A549 (cell line): ENCODE measurements at regions of chr1 and their contacts with region 1.

Region 1: DNA sequence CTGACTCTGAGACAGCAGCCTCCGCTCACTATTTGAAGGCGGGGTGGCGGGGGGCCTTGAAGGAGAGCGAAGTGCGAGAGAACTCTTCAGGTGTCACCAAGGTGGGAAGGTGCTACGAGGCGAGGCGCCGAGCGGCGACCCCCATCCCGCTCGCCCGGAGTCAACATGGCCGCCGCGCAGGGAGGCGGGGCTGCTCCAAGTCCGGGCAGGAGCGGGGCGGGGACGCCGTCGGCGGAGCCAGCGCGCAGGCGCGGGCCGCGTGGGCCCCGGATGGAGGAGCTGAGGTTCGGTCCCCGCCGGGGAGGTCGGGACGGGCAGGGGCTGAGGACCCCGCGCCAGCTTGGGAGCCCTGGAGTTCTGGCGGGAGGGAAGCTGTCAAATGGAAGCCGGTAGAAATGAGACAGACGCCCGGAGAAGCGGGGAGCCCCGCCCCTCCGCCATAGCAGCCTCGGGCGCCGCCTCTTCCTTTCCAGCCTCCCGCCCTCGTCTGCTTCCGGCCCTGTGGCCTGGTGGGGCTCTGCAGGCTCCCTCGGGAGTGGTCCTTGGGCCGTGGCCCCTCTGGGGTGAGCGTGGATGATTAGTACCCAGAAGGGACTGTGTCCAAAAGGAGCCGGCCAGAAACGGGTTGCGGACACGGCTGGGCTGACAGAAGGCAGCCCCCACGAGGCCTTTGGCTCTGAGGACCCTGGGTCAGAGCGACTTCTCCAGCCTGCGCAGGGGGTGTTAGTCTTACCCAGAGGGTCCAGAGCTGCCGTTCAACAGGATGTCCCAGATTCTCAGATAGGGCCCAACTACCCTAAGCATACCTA is at the start of gene PIGV:
- DNase-seq: peak; percentile 76 to 78
- ATAC-seq: peak; percentile 87 to 88
- H3K4me3 ChIP-seq: peak within 1 kb of the TSS; percentile 68
- H3K27ac ChIP-seq: peak within 1 kb of the TSS; percentile 84 to 100
- H3K4me1 ChIP-seq: peaks cover 43% of the 10 kb centered on the region
- CTCF ChIP-seq: no peak
- EP300 ChIP-seq: no peak
- POLR2A ChIP-seq: peak; percentile 57
- RAD21 ChIP-seq: no peak
- polyA plus RNA-seq, gene PIGV: 16.2 and 21.7 TPM in 2 replicates

Region 2: GRCh38 chr1:26602378-26602959 is 185.4 kb before region 1 on chr1:
- CTCF ChIA-PET with region 1: interaction called, 215 read pairs
- POLR2A ChIA-PET with region 1: interaction called, 5 read pairs
- DNase-seq: peak; percentile 48
- ATAC-seq: no peak
- H3K4me3 ChIP-seq: no peak overlapping the region
- H3K27ac ChIP-seq: no peak overlapping the region
- H3K4me1 ChIP-seq: no peaks in the 10 kb centered on the region
- CTCF ChIP-seq: peak; percentile 81
- EP300 ChIP-seq: no peak
- POLR2A ChIP-seq: no peak
- RAD21 ChIP-seq: peak; percentile 88 to 91

Region 3: DNA sequence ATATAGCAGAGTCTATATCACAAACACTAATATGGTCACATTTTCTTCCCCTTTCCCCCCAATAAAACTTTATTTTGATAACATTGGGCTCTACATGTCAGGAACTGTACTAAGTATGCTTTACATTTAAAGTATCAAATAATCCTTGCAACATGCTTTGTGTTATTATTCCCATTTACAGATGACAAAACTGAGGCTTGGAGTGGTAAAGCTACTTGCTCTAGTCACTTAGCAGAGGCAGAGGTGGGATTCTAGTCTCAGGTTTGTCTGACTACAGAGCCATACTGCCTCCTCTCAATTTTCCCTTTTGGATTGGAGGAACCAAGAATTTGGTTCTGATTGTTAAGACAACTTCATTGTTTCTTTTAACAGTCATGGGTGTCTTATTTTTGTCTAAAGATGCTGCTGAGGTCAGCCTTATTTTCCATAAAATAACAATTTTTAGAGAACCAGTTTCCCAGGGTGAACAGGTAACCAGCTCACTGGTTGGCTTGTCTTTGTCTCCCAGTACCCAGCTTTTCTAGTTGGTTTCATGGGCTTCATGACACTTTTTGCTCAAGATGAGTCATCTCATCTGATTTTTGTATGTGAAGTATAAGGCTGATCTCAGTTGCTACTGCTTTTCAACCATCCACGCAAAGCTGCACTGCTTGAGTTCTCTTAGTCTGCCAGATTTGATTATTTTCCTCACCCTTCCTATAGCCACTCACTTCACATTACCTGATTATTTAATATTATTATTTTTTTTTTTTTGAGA is 173.1 kb before region 1 on chr1:
- CTCF ChIA-PET with region 1: interaction called, 18 read pairs
- POLR2A ChIA-PET with region 1: no interaction called
- DNase-seq: no peak
- ATAC-seq: no peak
- H3K4me3 ChIP-seq: no peak overlapping the region
- H3K27ac ChIP-seq: no peak overlapping the region
- H3K4me1 ChIP-seq: peaks cover 9% of the 10 kb centered on the region
- CTCF ChIP-seq: no peak
- EP300 ChIP-seq: no peak
- POLR2A ChIP-seq: no peak
- RAD21 ChIP-seq: no peak

Region 4: GRCh38 chr1:26677306-26678115 is 110.4 kb before region 1 on chr1:
- CTCF ChIA-PET with region 1: interaction called, 66 read pairs
- POLR2A ChIA-PET with region 1: no interaction called
- DNase-seq: peak; percentile 81 to 92
- ATAC-seq: peak; percentile 100
- H3K4me3 ChIP-seq: no peak overlapping the region
- H3K27ac ChIP-seq: peak overlapping the region; percentile 53 to 66
- H3K4me1 ChIP-seq: peaks cover 9% of the 10 kb centered on the region; the same call in 2 of the 3 replicates
- CTCF ChIP-seq: peak; percentile 75
- EP300 ChIP-seq: no peak
- POLR2A ChIP-seq: no peak
- RAD21 ChIP-seq: peak in 1 of 2 experiments; percentile 73

Region 5: DNA sequence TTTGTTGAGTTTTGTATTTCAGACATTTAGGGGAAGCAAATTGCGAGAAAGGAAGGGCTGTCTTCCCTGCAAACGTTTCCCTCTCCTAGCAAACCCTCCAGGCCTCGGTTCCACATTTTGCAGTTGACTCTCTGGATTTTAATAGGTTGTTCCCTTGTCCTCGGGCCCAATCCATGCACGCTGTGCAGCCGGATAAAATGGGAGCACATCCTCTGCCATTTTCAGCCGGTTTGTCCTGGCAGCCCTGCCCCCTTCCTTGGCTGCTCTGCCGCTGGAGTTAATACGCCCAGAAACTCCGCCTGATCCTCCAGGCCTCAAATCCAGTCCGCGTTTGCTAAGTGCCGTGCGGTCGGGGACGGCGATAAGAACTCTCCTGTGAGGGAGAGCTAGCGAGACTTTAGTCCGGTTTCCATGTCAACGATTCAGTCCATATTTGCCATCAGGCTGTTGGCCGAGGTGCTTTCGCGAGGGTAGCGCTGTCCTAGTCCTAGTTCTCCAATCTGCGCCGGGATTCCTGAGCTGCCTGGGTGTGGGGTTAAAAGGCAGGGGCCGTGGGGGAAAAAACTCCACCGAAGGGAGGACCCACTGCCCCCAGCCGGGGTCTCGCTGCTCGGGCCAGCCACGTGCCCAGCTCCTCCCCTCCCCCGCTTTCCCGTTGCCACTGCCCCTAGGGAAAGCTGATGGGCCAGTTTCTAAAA is 95.0 kb before region 1 on chr1:
- CTCF ChIA-PET with region 1: interaction called, 35 read pairs
- POLR2A ChIA-PET with region 1: interaction called, 28 read pairs
- DNase-seq: peak; percentile 90 to 98
- ATAC-seq: peak; percentile 77 to 78
- H3K4me3 ChIP-seq: peak overlapping the region; percentile 47
- H3K27ac ChIP-seq: peak overlapping the region; percentile 100
- H3K4me1 ChIP-seq: peaks cover 24% of the 10 kb centered on the region
- CTCF ChIP-seq: no peak
- EP300 ChIP-seq: no peak; a peak in 1 of 5 replicates
- POLR2A ChIP-seq: peak; percentile 41; the same call in 1 of the 2 replicates
- RAD21 ChIP-seq: 0 out of 5 replicates have a peak, but pooled peaks have one; percentile 8 to 14

Region 6: GRCh38 chr1:26799479-26800142 is 11.7 kb after region 1 on chr1:
- CTCF ChIA-PET with region 1: interaction called, 49 read pairs
- POLR2A ChIA-PET with region 1: interaction called, 4 read pairs
- DNase-seq: no peak
- ATAC-seq: peak; percentile 73 to 76
- H3K4me3 ChIP-seq: no peak overlapping the region
- H3K27ac ChIP-seq: peak overlapping the region; percentile 40 to 57; a peak in 5 of 6 replicates
- H3K4me1 ChIP-seq: peaks cover 14% of the 10 kb centered on the region
- CTCF ChIP-seq: no peak
- EP300 ChIP-seq: no peak
- POLR2A ChIP-seq: no peak
- RAD21 ChIP-seq: no peak

Region 7: GRCh38 chr1:26848947-26849774 is 61.3 kb after region 1 on chr1:
- CTCF ChIA-PET with region 1: interaction called, 12 read pairs
- POLR2A ChIA-PET with region 1: no interaction called
- DNase-seq: peak; percentile 84 to 95
- ATAC-seq: peak; percentile 87 to 90
- H3K4me3 ChIP-seq: no peak overlapping the region
- H3K27ac ChIP-seq: peak overlapping the region; percentile 94 to 97
- H3K4me1 ChIP-seq: peaks cover 54% of the 10 kb centered on the region
- CTCF ChIP-seq: no peak
- EP300 ChIP-seq: peak; percentile 31 to 66; a peak in 2 of 5 replicates
- POLR2A ChIP-seq: no peak
- RAD21 ChIP-seq: no peak